ENCODE measurements at regions of chr3 and their contacts with region 1.

Region 1: GRCh38 chr3:143885780-143886427 is 37.6 kb upstream of the SLC9A9 start:
- DNase-seq: peak; percentile 23
- H3K4me3 ChIP-seq: no peak overlapping the region
- H3K27ac ChIP-seq: no peak overlapping the region
- H3K4me1 ChIP-seq: peaks cover 9% of the 10 kb centered on the region
- H3K27me3 ChIP-seq: no peaks in the 10 kb centered on the region
- CTCF ChIP-seq: peak; percentile 79 to 84

Region 2: GRCh38 chr3:143775459-143775858 is 110.4 kb before region 1 on chr3:
- CTCF ChIA-PET with region 1: no interaction called
- dilution Hi-C with region 1: no loop called
- in situ Hi-C with region 1: no loop called
- intact Hi-C with region 1: loop called (anchors 1 kb)
- DNase-seq: peak; percentile 44
- H3K4me3 ChIP-seq: no peak overlapping the region
- H3K27ac ChIP-seq: no peak overlapping the region
- H3K4me1 ChIP-seq: peaks cover 9% of the 10 kb centered on the region
- H3K27me3 ChIP-seq: no peaks in the 10 kb centered on the region
- CTCF ChIP-seq: peak; percentile 43 to 61

Region 3: GRCh38 chr3:143795874-143796273 is 90.0 kb before region 1 on chr3:
- CTCF ChIA-PET with region 1: no interaction called
- dilution Hi-C with region 1: no loop called
- in situ Hi-C with region 1: no loop called
- intact Hi-C with region 1: loop called (anchors 5 kb)
- DNase-seq: no peak
- H3K4me3 ChIP-seq: no peak overlapping the region
- H3K27ac ChIP-seq: no peak overlapping the region
- H3K4me1 ChIP-seq: no peaks in the 10 kb centered on the region
- H3K27me3 ChIP-seq: no peaks in the 10 kb centered on the region
- CTCF ChIP-seq: peak in 1 of 2 donors; percentile 19

Region 4: GRCh38 chr3:143935678-143936077 is 49.8 kb after region 1 on chr3:
- CTCF ChIA-PET with region 1: no interaction called
- dilution Hi-C with region 1: no loop called
- in situ Hi-C with region 1: no loop called
- intact Hi-C with region 1: no loop called
- DNase-seq: peak; percentile 20
- H3K4me3 ChIP-seq: no peak overlapping the region
- H3K27ac ChIP-seq: no peak overlapping the region
- H3K4me1 ChIP-seq: no peaks in the 10 kb centered on the region
- H3K27me3 ChIP-seq: no peaks in the 10 kb centered on the region
- CTCF ChIP-seq: no peak

Region 5: DNA sequence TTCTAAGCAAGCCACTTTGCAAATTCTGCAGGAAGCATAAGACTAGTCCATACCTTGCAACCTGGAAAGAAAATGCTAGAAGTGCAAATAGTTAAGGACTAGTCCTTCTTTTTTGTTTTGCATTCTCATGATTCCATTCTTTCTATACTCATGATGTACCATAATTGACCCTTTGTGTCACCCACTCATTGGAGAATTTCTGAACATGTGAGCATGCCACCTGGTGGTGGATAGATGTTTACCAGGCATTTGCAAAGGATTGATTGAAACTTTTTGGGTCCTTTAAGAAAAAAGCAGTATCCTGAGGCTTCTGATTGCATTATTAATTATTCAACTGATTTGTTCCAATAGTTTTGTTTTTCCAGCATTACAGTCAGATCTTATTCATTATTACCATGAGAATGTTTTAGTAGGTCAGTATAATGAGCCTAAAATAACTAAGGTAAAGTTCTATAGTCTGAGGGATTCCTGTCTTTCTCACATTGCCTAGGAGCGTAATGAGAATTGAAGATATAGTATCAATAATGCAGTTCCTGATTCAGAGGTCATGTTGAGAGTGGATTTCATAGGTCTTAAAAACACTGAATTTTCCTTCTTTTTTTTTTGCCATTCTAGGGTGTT is 65.6 kb after region 1 on chr3:
- CTCF ChIA-PET with region 1: no interaction called
- dilution Hi-C with region 1: no loop called
- in situ Hi-C with region 1: no loop called
- intact Hi-C with region 1: loop called (anchors 2 kb)
- DNase-seq: peak; percentile 28
- H3K4me3 ChIP-seq: no peak overlapping the region
- H3K27ac ChIP-seq: no peak overlapping the region
- H3K4me1 ChIP-seq: no peaks in the 10 kb centered on the region
- H3K27me3 ChIP-seq: no peaks in the 10 kb centered on the region
- CTCF ChIP-seq: peak; percentile 71 to 85

Measured in mammary epithelial cell (primary cell).